CD4-positive, alpha-beta memory T cell (primary cell): ENCODE measurements at regions of chr2 and their contacts with region 1.

Region 1: DNA sequence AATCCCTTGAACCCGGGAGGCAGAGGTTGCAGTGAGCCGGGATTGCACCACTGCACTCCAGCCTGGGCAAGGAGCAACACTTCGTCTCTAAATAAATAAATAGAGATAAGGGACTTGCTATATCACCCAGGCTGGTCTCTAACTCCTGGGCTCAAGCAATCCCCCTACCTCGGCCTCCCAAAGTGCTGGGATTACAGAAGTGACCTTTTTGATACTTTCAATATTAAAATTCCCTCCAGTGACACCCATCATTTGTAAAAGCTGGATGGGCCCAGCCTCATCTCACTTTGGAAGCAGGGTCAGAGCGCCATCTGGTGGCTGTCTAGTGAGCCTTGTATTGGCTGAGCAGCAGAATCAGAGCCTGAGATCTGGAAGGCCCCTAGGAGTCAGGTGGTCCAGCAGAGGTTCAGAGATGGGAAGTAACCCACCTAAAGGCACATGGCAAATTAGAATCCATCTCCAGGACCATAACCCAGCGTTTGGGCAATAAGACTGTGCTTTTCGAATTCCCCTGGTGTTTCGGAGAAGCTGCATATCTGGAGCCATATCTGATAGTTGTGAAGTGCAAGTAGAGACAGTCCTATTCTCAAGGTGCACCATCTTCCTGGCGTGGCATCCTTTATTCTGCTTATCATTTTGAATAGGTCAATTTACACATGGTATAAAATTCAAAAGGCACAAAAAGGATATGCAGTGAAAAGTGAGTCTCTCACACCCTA is 18.3 kb upstream of the SLC35F6 start:
- DNase-seq: peak; percentile 56 to 68 (median 59)
- H3K4me3 ChIP-seq: no peak overlapping the region
- H3K4me3 Mint-ChIP-seq: no peak overlapping the region
- H3K27ac ChIP-seq: no peak overlapping the region
- H3K27ac Mint-ChIP-seq: no peak overlapping the region
- H3K4me1 ChIP-seq: no peaks in the 10 kb centered on the region
- H3K4me1 Mint-ChIP-seq: peaks cover 0 to 2% (median under 1%) of the 10 kb centered on the region in 4 donors
- H3K27me3 ChIP-seq: no peaks in the 10 kb centered on the region
- H3K27me3 Mint-ChIP-seq: no peaks in the 10 kb centered on the region

Region 2: GRCh38 chr2:26503231-26503880 is 242.4 kb before region 1 on chr2:
- CTCF ChIA-PET with region 1: no interaction called
- POLR2A ChIA-PET with region 1: no interaction called
- intact Hi-C with region 1: loop called (anchors 10 kb)
- DNase-seq: peak; percentile 64 to 75 (median 73)
- H3K4me3 ChIP-seq: peak overlapping the region; percentile 53 to 67
- H3K4me3 Mint-ChIP-seq: peak overlapping the region; percentile 53 to 87 (median 80)
- H3K27ac ChIP-seq: no peak overlapping the region
- H3K27ac Mint-ChIP-seq: peak overlapping the region in 4 of 7 donors; percentile 10 to 83 (median 55)
- H3K4me1 ChIP-seq: peaks cover 13% of the 10 kb centered on the region
- H3K4me1 Mint-ChIP-seq: peaks cover 3 to 11% (median 6%) of the 10 kb centered on the region in 4 donors
- H3K27me3 ChIP-seq: no peaks in the 10 kb centered on the region
- H3K27me3 Mint-ChIP-seq: peaks cover 0 to 5% of the 10 kb centered on the region in 2 donors

Region 3: DNA sequence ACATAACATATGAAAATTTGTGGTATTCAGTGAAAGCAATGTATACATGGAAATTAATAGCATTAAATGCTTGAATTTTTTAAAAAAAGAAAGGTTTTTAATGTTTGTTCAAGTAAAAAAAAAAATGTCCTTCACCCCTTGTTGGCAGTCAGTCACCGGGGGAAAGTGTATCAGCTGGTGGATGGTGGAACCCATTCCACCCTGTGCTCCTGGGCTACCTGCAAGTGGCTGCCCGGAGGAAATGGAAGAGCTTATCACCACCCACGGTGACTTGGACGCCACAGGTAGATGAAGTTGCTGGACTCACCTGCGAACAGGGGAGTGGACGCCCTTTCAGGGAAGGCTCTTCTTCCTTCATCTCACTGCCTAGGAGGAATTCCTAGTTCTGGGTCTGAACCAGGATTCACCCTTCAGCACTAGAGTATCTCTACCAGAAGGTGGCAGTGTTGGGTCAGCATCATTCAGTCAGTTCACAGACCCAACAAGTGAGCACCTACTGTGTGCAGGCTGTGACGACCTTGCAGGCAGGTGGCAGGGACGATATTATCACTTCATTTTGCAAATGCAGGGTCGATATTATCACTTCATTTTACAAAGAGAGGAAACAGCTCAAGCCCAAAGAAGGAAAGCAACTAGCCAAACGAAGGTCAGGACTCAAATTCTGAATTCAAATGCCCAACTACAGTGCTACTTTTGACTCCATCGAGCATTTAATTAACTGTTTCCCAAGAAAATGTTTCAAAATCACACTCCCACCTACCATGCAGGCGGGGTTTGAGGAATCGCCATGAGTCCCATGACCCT is 140.4 kb before region 1 on chr2:
- CTCF ChIA-PET with region 1: interaction called, 43 read pairs
- POLR2A ChIA-PET with region 1: no interaction called
- intact Hi-C with region 1: no loop called
- DNase-seq: peak in 4 of 5 donors; percentile 12 to 21 (median 18)
- H3K4me3 ChIP-seq: no peak overlapping the region
- H3K4me3 Mint-ChIP-seq: no peak overlapping the region
- H3K27ac ChIP-seq: no peak overlapping the region
- H3K27ac Mint-ChIP-seq: no peak overlapping the region
- H3K4me1 ChIP-seq: peaks cover 5% of the 10 kb centered on the region
- H3K4me1 Mint-ChIP-seq: peaks cover 3 to 11% (median 8%) of the 10 kb centered on the region in 4 donors
- H3K27me3 ChIP-seq: peaks cover 4% of the 10 kb centered on the region
- H3K27me3 Mint-ChIP-seq: peaks cover 12 to 29% of the 10 kb centered on the region in 2 donors

Region 4: DNA sequence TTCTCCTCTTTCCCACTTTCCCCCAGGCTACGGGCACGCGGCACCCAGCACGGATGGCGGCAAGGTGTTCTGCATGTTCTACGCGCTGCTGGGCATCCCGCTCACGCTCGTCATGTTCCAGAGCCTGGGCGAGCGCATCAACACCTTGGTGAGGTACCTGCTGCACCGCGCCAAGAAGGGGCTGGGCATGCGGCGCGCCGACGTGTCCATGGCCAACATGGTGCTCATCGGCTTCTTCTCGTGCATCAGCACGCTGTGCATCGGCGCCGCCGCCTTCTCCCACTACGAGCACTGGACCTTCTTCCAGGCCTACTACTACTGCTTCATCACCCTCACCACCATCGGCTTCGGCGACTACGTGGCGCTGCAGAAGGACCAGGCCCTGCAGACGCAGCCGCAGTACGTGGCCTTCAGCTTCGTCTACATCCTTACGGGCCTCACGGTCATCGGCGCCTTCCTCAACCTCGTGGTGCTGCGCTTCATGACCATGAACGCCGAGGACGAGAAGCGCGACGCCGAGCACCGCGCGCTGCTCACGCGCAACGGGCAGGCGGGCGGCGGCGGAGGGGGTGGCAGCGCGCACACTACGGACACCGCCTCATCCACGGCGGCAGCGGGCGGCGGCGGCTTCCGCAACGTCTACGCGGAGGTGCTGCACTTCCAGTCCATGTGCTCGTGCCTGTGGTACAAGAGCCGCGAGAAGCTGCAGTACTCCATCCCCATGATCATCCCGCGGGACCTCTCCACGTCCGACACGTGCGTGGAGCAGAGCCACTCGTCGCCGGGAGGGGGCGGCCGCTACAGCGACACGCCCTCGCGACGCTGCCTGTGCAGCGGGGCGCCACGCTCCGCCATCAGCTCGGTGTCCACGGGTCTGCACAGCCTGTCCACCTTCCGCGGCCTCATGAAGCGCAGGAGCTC is 17.9 kb before region 1 on chr2:
- CTCF ChIA-PET with region 1: interaction called, 24 read pairs
- POLR2A ChIA-PET with region 1: no interaction called
- intact Hi-C with region 1: no loop called
- DNase-seq: peak in 3 of 5 donors; percentile 5 to 17 (median 10)
- H3K4me3 ChIP-seq: no peak overlapping the region
- H3K4me3 Mint-ChIP-seq: no peak overlapping the region
- H3K27ac ChIP-seq: no peak overlapping the region
- H3K27ac Mint-ChIP-seq: no peak overlapping the region
- H3K4me1 ChIP-seq: no peaks in the 10 kb centered on the region
- H3K4me1 Mint-ChIP-seq: no peaks in the 10 kb centered on the region
- H3K27me3 ChIP-seq: no peaks in the 10 kb centered on the region
- H3K27me3 Mint-ChIP-seq: peaks cover 4 to 16% of the 10 kb centered on the region in 2 donors

Region 5: DNA sequence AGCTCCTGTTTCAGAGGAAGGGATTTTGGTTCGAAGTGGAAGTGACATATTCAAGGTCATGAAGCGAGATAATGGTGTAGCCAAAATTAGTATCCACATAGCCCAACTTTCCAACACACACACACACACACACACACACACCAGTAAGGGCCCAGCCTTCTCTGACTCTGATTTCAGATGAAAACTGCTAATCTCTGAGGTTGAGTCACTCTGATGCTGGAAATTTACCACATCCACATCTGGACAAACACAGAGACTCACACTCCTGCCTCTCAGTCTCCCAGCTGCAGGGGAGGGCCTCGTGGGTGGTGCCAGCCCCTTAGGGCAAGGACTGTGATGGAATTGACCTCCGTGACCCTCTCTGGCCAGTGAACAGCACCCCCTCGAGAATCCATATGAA is 10.7 kb before region 1 on chr2:
- CTCF ChIA-PET with region 1: interaction called, 24 read pairs
- POLR2A ChIA-PET with region 1: interaction called, 3 read pairs
- intact Hi-C with region 1: no loop called
- DNase-seq: no peak
- H3K4me3 ChIP-seq: no peak overlapping the region
- H3K4me3 Mint-ChIP-seq: no peak overlapping the region
- H3K27ac ChIP-seq: no peak overlapping the region
- H3K27ac Mint-ChIP-seq: no peak overlapping the region
- H3K4me1 ChIP-seq: no peaks in the 10 kb centered on the region
- H3K4me1 Mint-ChIP-seq: no peaks in the 10 kb centered on the region
- H3K27me3 ChIP-seq: no peaks in the 10 kb centered on the region
- H3K27me3 Mint-ChIP-seq: peaks cover 5 to 15% of the 10 kb centered on the region in 2 donors

Region 6: GRCh38 chr2:26757873-26758789 is 12.4 kb after region 1 on chr2:
- CTCF ChIA-PET with region 1: interaction called, 40 read pairs
- POLR2A ChIA-PET with region 1: no interaction called
- intact Hi-C with region 1: no loop called
- DNase-seq: no peak
- H3K4me3 ChIP-seq: no peak overlapping the region
- H3K4me3 Mint-ChIP-seq: no peak overlapping the region
- H3K27ac ChIP-seq: no peak overlapping the region
- H3K27ac Mint-ChIP-seq: peak overlapping the region in 1 of 7 donors; percentile 54
- H3K4me1 ChIP-seq: peaks cover under 1% of the 10 kb centered on the region
- H3K4me1 Mint-ChIP-seq: peaks cover 0 to under 1% (median 0%) of the 10 kb centered on the region in 4 donors
- H3K27me3 ChIP-seq: no peaks in the 10 kb centered on the region
- H3K27me3 Mint-ChIP-seq: peaks cover 1 to 3% of the 10 kb centered on the region in 2 donors